Calu3 (cell line): ENCODE measurements at regions of chr7 and their contacts with region 1.

Region 1: DNA sequence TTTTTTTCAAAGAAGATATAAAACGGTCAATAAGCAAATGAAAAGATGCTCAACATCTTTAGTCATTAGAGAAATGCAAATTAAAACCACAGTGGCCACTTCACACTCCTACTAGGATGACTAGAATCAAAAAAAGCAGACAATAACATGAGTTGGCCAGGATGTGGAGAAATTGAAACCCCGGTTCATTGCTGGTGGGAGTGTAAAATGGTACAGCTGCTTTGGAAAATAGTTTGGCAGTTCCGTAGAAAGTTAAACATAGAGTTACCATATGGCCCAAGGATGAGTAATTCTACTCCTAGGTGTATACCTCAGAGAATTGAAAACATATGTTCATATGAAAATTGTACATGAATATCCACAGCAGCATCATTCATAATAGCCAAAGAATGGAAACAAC is 573.3 kb downstream of the GALNT17 start:
- DNase-seq: no peak
- H3K4me3 Mint-ChIP-seq: no peak overlapping the region
- H3K27ac Mint-ChIP-seq: no peak overlapping the region
- H3K4me1 Mint-ChIP-seq: no peaks in the 10 kb centered on the region
- H3K27me3 Mint-ChIP-seq: no peaks in the 10 kb centered on the region
- CTCF ChIP-seq: no peak

Region 2: DNA sequence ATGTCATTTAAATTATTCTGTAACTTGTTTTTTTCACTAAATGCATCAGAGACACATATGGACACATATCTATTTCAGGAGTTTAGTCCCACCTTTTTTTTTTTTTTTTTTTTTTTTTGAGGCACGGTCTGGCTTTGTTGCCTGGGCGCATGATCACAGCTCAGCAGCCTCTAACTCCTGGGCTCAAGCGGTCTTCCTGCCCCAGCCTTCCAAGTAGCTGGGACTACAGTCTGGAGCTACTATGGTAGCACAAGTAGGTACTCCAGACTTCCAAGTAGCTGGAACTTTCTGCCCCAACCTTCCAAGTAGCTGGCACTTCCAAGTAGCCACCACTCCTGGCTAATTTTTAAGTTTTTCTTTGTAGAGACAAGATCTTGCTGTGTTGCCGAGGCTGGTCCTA is 165.6 kb before region 1 on chr7:
- CTCF ChIA-PET with region 1: interaction called, 11 read pairs
- intact Hi-C with region 1: no loop called
- DNase-seq: no peak
- H3K4me3 Mint-ChIP-seq: no peak overlapping the region
- H3K27ac Mint-ChIP-seq: no peak overlapping the region
- H3K4me1 Mint-ChIP-seq: no peaks in the 10 kb centered on the region
- H3K27me3 Mint-ChIP-seq: no peaks in the 10 kb centered on the region
- CTCF ChIP-seq: no peak